ENCODE measurements at regions of chr11 and their contacts with region 1.

Region 1: DNA sequence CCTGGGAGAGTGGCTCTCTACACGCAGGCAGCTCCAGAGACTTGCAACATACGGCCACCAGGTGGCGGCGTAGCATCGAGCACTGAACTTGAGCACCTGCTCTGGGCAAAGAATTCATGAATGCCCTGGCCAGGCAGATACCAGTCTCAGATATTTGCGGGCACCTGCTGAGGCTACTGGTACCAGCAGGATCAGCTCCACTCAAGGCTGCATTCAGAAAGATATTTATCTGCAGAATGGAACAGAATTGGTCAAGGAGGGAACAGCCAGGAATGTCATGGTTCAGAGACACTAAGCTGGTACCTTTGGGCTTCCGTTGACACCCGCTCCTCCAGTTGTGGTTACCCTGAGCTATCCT is 10.8 kb upstream of the CCDC86 start:
- DNase-seq: peak; percentile 46
- H3K4me3 ChIP-seq: no peak overlapping the region
- H3K27ac ChIP-seq: peak overlapping the region; percentile 11
- H3K27me3 ChIP-seq: peaks cover 28% of the 10 kb centered on the region
- CTCF ChIP-seq: peak; percentile 94

Region 2: DNA sequence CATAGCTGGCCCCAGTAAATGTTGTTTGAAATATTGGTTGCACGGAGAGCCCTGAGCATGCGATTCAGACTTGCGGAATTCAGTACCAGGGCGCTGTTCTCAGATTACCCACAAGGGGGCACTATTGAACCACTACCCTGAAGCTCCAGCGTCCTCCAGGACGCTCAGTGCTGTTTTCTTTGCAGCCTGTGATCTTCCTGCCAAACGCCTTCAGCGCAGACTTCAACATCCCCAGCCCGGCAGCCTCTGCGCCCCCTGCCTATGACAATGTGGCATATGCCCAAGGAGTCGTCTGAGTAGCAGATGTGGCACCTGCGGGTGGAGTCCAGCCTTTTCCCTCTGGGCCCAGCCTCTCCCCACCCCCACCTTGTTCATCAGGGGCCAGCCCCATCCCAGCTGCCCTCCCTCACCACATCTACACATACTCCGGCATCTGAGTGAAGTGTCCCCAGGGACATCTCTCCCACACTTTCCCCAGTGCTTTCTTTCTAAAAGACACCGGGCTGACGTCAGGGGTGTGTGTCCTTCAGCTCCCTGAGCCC is 55.6 kb before region 1 on chr11:
- CTCF ChIA-PET with region 1: interaction called, 29 read pairs
- POLR2A ChIA-PET with region 1: no interaction called
- DNase-seq: peak; percentile 81
- H3K4me3 ChIP-seq: no peak overlapping the region
- H3K27ac ChIP-seq: no peak overlapping the region
- H3K27me3 ChIP-seq: peaks cover 3% of the 10 kb centered on the region
- CTCF ChIP-seq: peak; percentile 91

Region 3: GRCh38 chr11:60847281-60847680 is 16.2 kb after region 1 on chr11:
- CTCF ChIA-PET with region 1: interaction called, 33 read pairs
- POLR2A ChIA-PET with region 1: no interaction called
- DNase-seq: no peak
- H3K4me3 ChIP-seq: no peak overlapping the region
- H3K27ac ChIP-seq: no peak overlapping the region
- H3K27me3 ChIP-seq: no peaks in the 10 kb centered on the region
- CTCF ChIP-seq: no peak

Region 4: DNA sequence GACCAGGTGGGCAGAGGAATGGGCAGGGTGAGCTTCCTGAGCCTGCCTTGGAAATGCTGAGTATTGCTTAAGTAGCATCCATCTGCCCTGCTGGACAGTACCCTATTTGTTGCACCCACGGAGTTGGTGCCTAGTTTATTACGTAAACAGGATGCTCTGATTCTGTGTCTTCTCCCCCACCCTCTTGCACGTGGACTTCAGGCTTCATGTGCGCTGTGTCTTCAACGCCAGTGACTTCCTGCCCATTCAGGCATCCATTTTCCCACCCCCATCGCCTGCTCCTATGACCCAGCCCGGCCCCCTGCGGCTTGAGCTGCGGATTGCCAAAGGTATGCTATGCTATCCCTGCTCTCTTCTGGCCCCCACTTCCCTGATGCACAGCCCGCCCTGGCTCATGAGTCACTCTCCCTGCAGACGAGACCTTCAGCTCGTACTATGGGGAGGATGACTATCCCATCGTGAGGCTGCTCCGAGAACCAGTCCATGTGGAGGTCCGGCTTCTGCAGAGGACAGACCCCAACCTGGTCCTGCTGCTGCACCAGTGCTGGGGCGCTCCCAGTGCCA is 41.9 kb after region 1 on chr11:
- CTCF ChIA-PET with region 1: interaction called, 16 read pairs
- POLR2A ChIA-PET with region 1: no interaction called
- DNase-seq: peak; percentile 39
- H3K4me3 ChIP-seq: no peak overlapping the region
- H3K27ac ChIP-seq: peak overlapping the region; percentile 70
- H3K27me3 ChIP-seq: peaks cover 2% of the 10 kb centered on the region
- CTCF ChIP-seq: no peak

Region 5: GRCh38 chr11:60887556-60887955 is 56.4 kb after region 1 on chr11:
- CTCF ChIA-PET with region 1: interaction called, 295 read pairs
- POLR2A ChIA-PET with region 1: interaction called, 6 read pairs
- DNase-seq: no peak
- H3K4me3 ChIP-seq: no peak overlapping the region
- H3K27ac ChIP-seq: no peak overlapping the region
- H3K27me3 ChIP-seq: no peaks in the 10 kb centered on the region
- CTCF ChIP-seq: peak; percentile 80

Region 6: GRCh38 chr11:60913793-60914632 is 82.9 kb after region 1 on chr11 and contains the start of gene TMEM109:
- CTCF ChIA-PET with region 1: interaction called, 13 read pairs
- POLR2A ChIA-PET with region 1: no interaction called
- DNase-seq: peak; percentile 59
- H3K4me3 ChIP-seq: peak within 1 kb of the TSS; percentile 80
- H3K27ac ChIP-seq: peak within 1 kb of the TSS; percentile 96
- H3K27me3 ChIP-seq: peaks cover 5% of the 10 kb centered on the region
- CTCF ChIP-seq: no peak
- polyA plus RNA-seq, gene TMEM109: 36.2 and 44.5 TPM in 2 replicates